Activated CD4-positive, alpha-beta T cell treated with anti-CD3 and anti-CD28 coated beads, Interleukin-2, amount 10 ng/mL, durations not matched to agents 24 days and 14 days (primary cell): ENCODE measurements at regions of chr2 and their contacts with region 1.

Region 1: GRCh38 chr2:30146438-30147147 is at the start of gene YPEL5:
- DNase-seq: peak; percentile 100
- H3K4me3 Mint-ChIP-seq: peak within 1 kb of the TSS; percentile 87
- H3K27ac Mint-ChIP-seq: peak within 1 kb of the TSS; percentile 97
- H3K4me1 Mint-ChIP-seq: peaks cover 32% of the 10 kb centered on the region
- H3K27me3 Mint-ChIP-seq: no peaks in the 10 kb centered on the region
- total RNA-seq, gene YPEL5: 16.8 and 19.6 TPM in 2 replicates

Region 2: GRCh38 chr2:28870146-28870891 is 1276.3 kb before region 1 on chr2 and contains the start of gene TRMT61B:
- intact Hi-C with region 1: loop called (anchors 5 kb)
- DNase-seq: peak; percentile 100
- H3K4me3 Mint-ChIP-seq: peak within 1 kb of the TSS; percentile 94
- H3K27ac Mint-ChIP-seq: peak within 1 kb of the TSS; percentile 97
- H3K4me1 Mint-ChIP-seq: peaks cover 20% of the 10 kb centered on the region
- H3K27me3 Mint-ChIP-seq: peaks cover 9% of the 10 kb centered on the region
- total RNA-seq, gene TRMT61B: 18.9 and 20.1 TPM in 2 replicates

Region 3: GRCh38 chr2:31318361-31319336 is 1172.1 kb after region 1 on chr2:
- intact Hi-C with region 1: loop called (anchors 5 kb)
- DNase-seq: peak; percentile 85
- H3K4me3 Mint-ChIP-seq: peak overlapping the region; percentile 64
- H3K27ac Mint-ChIP-seq: peak overlapping the region; percentile 67
- H3K4me1 Mint-ChIP-seq: peaks cover 52% of the 10 kb centered on the region
- H3K27me3 Mint-ChIP-seq: peaks cover 2% of the 10 kb centered on the region